WTC11 (cell line): ENCODE measurements at regions of chr11 and their contacts with region 1.

Region 1: DNA sequence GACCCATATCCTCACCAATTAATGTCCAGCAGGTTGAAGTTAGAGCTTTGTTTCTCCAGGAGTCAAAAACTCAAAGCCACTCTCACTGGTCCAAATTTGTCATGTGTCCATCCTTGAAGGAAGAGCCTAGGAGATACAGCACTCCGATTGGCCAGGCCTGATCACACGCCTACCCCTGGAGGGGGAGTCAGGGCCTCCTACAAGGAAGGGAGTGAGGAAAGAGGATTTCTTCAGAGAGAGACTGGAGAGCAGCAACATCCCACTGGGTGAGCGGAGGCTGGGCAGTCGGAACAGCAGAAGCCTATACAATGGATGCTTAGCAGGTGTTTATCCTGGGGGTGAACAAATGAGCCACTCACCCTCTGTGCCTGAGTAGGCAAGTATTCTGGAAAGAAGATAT is 113.9 kb downstream of the TRIM29 start:
- DNase-seq: no peak
- ATAC-seq: peak; percentile 42
- H3K4me3 Mint-ChIP-seq: no peak overlapping the region; the same call in 1 of the 2 replicates
- H3K27ac Mint-ChIP-seq: 0 out of 2 replicates have a peak overlapping the region, but pooled peaks have one; percentile 63
- H3K4me1 Mint-ChIP-seq: peaks cover 30% of the 10 kb centered on the region
- H3K27me3 Mint-ChIP-seq: peaks cover 12% of the 10 kb centered on the region
- CTCF ChIP-seq: no peak

Region 2: GRCh38 chr11:120061761-120062560 is 37.9 kb after region 1 on chr11:
- CTCF ChIA-PET with region 1: interaction called, 11 read pairs
- POLR2A ChIA-PET with region 1: no interaction called
- DNase-seq: peak; percentile 57
- ATAC-seq: peak; percentile 49
- H3K4me3 Mint-ChIP-seq: no peak overlapping the region
- H3K27ac Mint-ChIP-seq: no peak overlapping the region
- H3K4me1 Mint-ChIP-seq: peaks cover 52% of the 10 kb centered on the region
- H3K27me3 Mint-ChIP-seq: peaks cover 6% of the 10 kb centered on the region
- CTCF ChIP-seq: no peak